Activated CD4-positive, alpha-beta T cell treated with anti-CD3 and anti-CD28 coated beads for 36 hours (primary cell): ENCODE measurements at regions of chr19 and their contacts with region 1.

Region 1: DNA sequence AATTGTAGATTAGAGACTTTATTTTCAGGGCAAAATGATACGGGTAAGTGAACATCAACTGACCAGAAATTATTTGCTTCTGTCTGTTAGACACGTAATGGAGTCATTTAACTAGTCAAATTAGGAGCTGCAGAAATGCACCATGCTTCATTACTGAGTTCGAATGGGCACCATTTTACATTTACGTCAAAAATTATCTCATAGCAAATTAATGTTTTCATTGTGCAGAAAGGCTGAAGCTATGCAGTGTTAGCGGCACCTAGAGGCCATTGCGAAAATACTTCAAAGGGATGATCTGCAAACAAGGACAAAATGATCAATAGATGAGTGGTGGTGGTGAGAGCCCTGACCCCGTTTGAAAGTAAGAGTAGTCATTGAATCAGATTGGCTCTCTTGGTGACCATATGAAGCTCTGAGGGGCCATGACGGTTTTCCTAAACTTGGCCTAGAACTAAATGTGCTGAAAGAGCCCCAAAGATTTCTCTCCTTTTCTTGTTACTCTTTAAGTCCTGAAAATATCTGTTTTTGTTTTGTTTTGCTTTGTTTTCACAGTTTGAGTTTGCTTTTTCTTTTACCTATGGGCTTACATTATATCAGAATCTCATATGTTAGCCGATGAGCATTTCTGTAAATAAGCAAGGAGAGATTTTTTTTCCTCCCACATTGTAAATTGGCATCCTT is 277.9 kb downstream of the ZNF536 start:
- DNase-seq: peak; percentile 68
- ATAC-seq: peak; percentile 58
- H3K4me3 Mint-ChIP-seq: no peak overlapping the region
- H3K27ac Mint-ChIP-seq: no peak overlapping the region
- H3K4me1 Mint-ChIP-seq: no peaks in the 10 kb centered on the region
- H3K27me3 Mint-ChIP-seq: peaks cover 25% of the 10 kb centered on the region

Region 2: GRCh38 chr19:29735800-29736199 is 914.3 kb before region 1 on chr19:
- CTCF ChIA-PET with region 1: interaction called, 4 read pairs
- POLR2A ChIA-PET with region 1: no interaction called
- intact Hi-C with region 1: loop called (anchors 1 to 2 kb)
- DNase-seq: no peak
- ATAC-seq: no peak
- H3K4me3 Mint-ChIP-seq: no peak overlapping the region
- H3K27ac Mint-ChIP-seq: no peak overlapping the region
- H3K4me1 Mint-ChIP-seq: no peaks in the 10 kb centered on the region
- H3K27me3 Mint-ChIP-seq: peaks cover 4% of the 10 kb centered on the region

Region 3: DNA sequence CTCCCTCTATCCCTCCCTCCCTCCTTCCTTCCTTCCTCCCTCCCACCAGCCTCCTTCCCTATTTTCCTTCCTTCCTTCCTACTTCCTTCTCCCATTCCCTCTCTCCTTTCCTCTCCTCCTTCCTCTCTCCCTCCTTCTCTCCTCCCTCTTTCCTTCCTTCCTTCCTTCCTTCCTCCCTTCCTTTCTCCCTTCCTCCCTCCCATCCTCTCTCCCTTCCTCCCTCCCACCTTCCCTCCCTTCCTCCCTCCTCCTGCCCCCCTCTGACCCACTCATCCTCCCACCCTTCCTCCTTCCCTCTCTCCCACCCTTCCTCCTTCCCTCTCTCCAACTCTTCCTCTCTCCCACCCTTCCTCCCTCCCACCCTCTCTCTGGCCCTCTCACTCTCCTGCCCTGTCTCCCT is 145.8 kb before region 1 on chr19:
- CTCF ChIA-PET with region 1: no interaction called
- POLR2A ChIA-PET with region 1: no interaction called
- intact Hi-C with region 1: no loop called
- DNase-seq: no peak
- ATAC-seq: no peak
- H3K4me3 Mint-ChIP-seq: no peak overlapping the region
- H3K27ac Mint-ChIP-seq: no peak overlapping the region
- H3K4me1 Mint-ChIP-seq: no peaks in the 10 kb centered on the region
- H3K27me3 Mint-ChIP-seq: peaks cover 5% of the 10 kb centered on the region

Region 4: DNA sequence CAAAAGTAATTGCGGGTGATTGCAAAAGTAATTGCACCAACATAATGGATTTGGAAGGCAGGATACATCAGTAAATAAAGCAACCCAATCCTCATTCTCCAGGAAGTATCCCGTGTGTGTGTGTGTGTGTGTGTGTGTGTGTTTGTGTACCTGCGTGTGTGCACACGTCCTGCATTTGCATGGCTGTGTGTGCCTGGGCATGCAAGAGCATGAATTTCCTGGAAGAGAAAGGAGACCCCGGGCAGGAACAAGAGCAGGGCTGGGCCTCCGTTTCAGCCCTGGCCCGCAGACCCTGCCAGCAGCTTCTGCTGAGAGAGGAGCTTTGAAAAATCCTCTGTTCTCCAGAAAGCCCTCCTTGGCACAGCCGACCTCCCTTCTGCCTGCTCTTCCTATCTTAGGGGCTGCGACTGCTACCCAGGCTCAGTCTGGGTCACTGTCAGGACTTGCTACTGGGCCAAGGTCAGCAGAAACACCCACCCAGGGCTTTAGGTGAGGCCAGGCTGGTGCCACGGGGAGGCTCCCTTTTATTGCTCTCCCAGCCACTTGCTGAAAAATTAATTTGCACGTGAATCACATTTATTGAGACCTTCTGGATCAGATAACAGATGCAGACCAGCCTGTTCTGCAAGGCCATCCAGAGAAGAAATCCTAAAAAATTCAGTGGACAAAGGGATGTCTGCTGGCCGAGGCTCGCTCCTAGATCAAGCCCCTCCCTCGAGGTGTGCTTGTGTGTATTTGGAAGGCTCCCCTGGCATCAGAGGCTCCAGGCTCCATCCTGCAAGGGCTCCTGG is 19.6 kb before region 1 on chr19:
- CTCF ChIA-PET with region 1: no interaction called
- POLR2A ChIA-PET with region 1: no interaction called
- intact Hi-C with region 1: no loop called
- DNase-seq: no peak
- ATAC-seq: no peak
- H3K4me3 Mint-ChIP-seq: no peak overlapping the region
- H3K27ac Mint-ChIP-seq: no peak overlapping the region
- H3K4me1 Mint-ChIP-seq: no peaks in the 10 kb centered on the region
- H3K27me3 Mint-ChIP-seq: peaks cover 2% of the 10 kb centered on the region

Region 5: DNA sequence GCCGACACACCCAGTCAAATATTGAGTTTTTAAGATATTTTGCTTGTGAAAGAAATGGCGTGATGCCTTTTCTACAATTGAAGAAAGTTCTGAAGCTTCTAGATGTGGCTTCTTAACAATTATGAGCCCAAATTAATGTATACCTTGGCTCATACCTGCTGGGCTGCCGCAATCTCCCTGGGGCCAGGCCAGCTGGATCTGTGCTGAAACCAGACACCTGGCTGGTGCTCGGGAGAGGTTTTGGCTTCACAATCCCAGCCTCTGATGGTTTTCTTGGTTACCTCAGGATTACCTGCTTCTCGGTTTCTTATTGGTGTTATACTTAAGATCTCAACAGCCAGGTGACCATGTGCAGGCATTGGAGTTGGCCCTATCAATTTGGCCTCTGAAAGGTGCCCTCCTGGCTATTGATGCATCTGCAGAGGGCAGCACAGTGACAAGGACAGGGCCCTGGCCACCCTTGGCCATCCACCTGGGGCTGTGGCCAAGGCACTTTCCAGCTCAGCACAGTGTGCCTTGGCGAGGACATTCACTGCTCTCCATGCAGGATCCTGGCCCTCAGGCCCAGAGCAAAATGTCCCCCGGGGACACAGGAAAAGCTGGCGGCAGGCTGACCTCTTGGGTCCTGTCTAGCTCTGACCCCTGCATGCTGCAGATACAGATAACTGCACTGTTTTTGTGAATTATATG is 27.1 kb after region 1 on chr19:
- CTCF ChIA-PET with region 1: no interaction called
- POLR2A ChIA-PET with region 1: no interaction called
- intact Hi-C with region 1: no loop called
- DNase-seq: no peak
- ATAC-seq: no peak
- H3K4me3 Mint-ChIP-seq: no peak overlapping the region
- H3K27ac Mint-ChIP-seq: no peak overlapping the region
- H3K4me1 Mint-ChIP-seq: no peaks in the 10 kb centered on the region
- H3K27me3 Mint-ChIP-seq: peaks cover 4% of the 10 kb centered on the region